Activated B cell treated with CpG ODN at 0.5 μM for 24 hours (primary cell): ENCODE measurements at regions of chr4 and their contacts with region 1.

Region 1: GRCh38 chr4:81471588-81472288 is at the start of gene RASGEF1B:
- DNase-seq: peak; percentile 97
- ATAC-seq: peak; percentile 82
- H3K4me3 Mint-ChIP-seq: peak within 1 kb of the TSS; percentile 92
- H3K27ac Mint-ChIP-seq: peak within 1 kb of the TSS; percentile 97
- H3K4me1 Mint-ChIP-seq: peaks cover 53% of the 10 kb centered on the region
- H3K27me3 Mint-ChIP-seq: no peaks in the 10 kb centered on the region
- CTCF ChIP-seq: no peak
- total RNA-seq, gene RASGEF1B: 40.2 and 43.7 TPM in 2 replicates

Region 2: GRCh38 chr4:81405894-81406401 is 65.8 kb before region 1 on chr4:
- CTCF ChIA-PET with region 1: no interaction called
- POLR2A ChIA-PET with region 1: no interaction called
- intact Hi-C with region 1: loop called (anchors 1 kb)
- DNase-seq: no peak
- ATAC-seq: peak; percentile 81
- H3K4me3 Mint-ChIP-seq: no peak overlapping the region
- H3K27ac Mint-ChIP-seq: no peak overlapping the region
- H3K4me1 Mint-ChIP-seq: peaks cover 3% of the 10 kb centered on the region
- H3K27me3 Mint-ChIP-seq: peaks cover 3% of the 10 kb centered on the region
- CTCF ChIP-seq: peak; percentile 93

Region 3: GRCh38 chr4:81505004-81505598 is 33.4 kb after region 1 on chr4:
- CTCF ChIA-PET with region 1: interaction called, 7 read pairs
- POLR2A ChIA-PET with region 1: interaction called, 34 read pairs
- intact Hi-C with region 1: loop called (anchors 1 kb)
- DNase-seq: no peak
- ATAC-seq: peak; percentile 56
- H3K4me3 Mint-ChIP-seq: peak overlapping the region; percentile 71
- H3K27ac Mint-ChIP-seq: peak overlapping the region; percentile 92
- H3K4me1 Mint-ChIP-seq: peaks cover 86% of the 10 kb centered on the region
- H3K27me3 Mint-ChIP-seq: no peaks in the 10 kb centered on the region
- CTCF ChIP-seq: no peak

Region 4: DNA sequence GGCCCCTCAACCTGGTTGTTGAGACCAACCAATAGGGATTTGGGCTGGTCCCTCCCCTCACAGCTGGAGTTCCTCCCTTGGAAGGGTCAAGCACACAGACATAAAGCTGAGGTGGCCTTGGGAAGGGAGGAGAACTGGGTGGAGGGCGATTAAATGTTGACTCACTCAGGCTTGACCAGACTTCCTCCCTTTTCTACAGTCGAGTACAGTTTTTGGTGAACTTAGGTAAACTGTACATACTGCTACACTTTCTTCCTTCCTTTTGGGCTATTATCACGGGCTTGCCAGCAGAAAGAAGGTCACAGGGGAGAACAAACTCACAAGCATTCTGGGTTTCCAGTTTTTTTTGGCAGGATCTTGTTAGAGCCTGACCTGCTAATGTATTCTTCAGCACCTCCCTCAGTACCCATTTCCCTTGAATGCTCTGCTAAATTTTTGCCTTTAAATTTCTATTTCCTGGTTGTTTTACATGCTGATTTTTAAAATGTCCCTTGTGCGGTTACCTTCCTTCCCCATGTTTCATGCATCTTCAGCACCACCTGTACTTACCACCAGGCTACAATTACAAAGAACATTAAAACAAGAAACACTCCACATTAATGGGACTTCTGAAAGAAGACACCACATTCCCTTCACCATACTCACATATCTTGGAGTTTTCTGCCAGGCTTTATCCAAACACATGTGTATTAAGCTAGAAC is 135.2 kb after region 1 on chr4:
- CTCF ChIA-PET with region 1: interaction called, 14 read pairs
- POLR2A ChIA-PET with region 1: interaction called, 38 read pairs
- intact Hi-C with region 1: loop called (anchors 1 kb)
- DNase-seq: no peak
- ATAC-seq: peak; percentile 54
- H3K4me3 Mint-ChIP-seq: peak overlapping the region; percentile 55
- H3K27ac Mint-ChIP-seq: peak overlapping the region; percentile 86
- H3K4me1 Mint-ChIP-seq: peaks cover 58% of the 10 kb centered on the region
- H3K27me3 Mint-ChIP-seq: no peaks in the 10 kb centered on the region
- CTCF ChIP-seq: no peak

Region 5: DNA sequence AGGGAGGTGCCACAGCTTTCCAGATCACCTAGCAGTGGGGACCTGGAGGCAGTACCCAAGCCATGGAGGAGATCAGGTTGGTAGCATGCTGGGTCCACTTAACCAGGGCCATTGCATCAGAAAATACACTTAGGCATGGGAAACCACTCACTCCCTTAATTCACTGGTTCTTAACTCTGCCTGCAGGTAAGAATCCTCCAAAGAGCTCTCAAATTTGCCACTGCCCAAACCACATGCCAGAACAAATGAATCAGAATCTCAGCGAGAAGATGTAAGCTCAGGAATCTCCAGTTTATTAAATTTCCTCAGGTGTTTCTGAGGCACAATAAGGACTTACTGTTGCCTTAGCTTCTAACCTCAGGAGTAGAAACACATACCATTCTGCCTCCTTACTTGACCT is 327.6 kb after region 1 on chr4:
- CTCF ChIA-PET with region 1: no interaction called
- POLR2A ChIA-PET with region 1: no interaction called
- intact Hi-C with region 1: no loop called
- DNase-seq: no peak
- ATAC-seq: no peak
- H3K4me3 Mint-ChIP-seq: no peak overlapping the region
- H3K27ac Mint-ChIP-seq: no peak overlapping the region
- H3K4me1 Mint-ChIP-seq: peaks cover 7% of the 10 kb centered on the region
- H3K27me3 Mint-ChIP-seq: no peaks in the 10 kb centered on the region
- CTCF ChIP-seq: no peak

Region 6: DNA sequence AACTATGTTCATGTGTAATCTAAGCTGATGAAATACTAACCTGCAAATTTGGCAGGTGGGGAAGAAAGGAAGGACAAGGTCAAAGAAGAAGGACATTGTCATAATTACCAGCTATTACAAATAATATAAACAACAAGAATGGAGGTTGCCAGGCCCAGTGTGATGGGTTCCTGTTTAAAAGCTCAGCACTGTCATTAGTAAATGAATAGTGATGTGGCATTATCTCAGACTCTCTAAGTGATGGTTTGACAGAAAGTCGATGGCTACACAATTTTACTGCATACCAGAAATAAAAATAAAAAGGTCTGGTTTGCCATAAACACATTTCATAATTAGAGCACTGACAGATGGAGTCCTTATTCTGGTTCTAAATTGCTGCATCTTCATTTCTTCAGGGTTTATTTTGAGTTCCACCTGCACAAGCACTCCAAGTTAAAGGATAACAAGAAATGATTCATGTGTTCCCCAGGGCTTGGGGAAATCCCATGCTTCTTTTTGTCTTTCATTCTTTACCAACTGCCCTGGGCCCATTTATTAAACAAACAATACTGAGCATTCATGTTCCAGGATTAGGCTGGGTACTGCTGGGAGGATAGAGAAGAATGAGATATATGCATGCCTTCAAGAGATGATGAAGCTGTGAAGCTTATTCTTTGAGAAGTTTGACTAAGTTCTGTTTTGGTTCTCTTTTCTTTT is 367.8 kb after region 1 on chr4:
- CTCF ChIA-PET with region 1: interaction called, 239 read pairs
- POLR2A ChIA-PET with region 1: interaction called, 26 read pairs
- intact Hi-C with region 1: loop called (anchors 1 kb)
- DNase-seq: no peak
- ATAC-seq: peak; percentile 68
- H3K4me3 Mint-ChIP-seq: no peak overlapping the region
- H3K27ac Mint-ChIP-seq: peak overlapping the region; percentile 4
- H3K4me1 Mint-ChIP-seq: peaks cover 13% of the 10 kb centered on the region
- H3K27me3 Mint-ChIP-seq: no peaks in the 10 kb centered on the region
- CTCF ChIP-seq: no peak

Region 7: DNA sequence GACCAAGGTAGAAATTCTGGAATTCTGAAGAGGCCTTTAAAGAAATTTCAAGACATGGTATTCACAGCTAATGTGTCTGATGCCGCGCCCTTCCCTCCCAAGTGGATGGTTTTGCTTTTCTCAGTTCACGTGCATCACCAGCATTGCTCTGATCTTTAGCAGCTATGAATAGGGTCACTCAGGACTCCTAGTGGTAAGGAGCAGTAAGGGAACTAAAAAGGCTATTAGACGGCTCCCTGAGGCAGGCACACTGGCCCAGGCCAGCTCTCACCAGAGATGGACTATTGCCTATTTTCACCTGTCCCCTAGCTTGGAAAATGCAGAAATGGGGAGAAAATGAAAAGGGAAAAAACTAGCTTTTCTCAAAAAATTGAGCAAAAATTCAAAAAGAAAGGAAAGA is 447.5 kb after region 1 on chr4:
- CTCF ChIA-PET with region 1: interaction called, 10 read pairs
- POLR2A ChIA-PET with region 1: no interaction called
- intact Hi-C with region 1: loop called (anchors 1 kb)
- DNase-seq: no peak
- ATAC-seq: peak; percentile 72
- H3K4me3 Mint-ChIP-seq: no peak overlapping the region
- H3K27ac Mint-ChIP-seq: no peak overlapping the region
- H3K4me1 Mint-ChIP-seq: no peaks in the 10 kb centered on the region
- H3K27me3 Mint-ChIP-seq: peaks cover 9% of the 10 kb centered on the region
- CTCF ChIP-seq: no peak

Region 8: GRCh38 chr4:82031376-82031927 is 559.7 kb after region 1 on chr4:
- CTCF ChIA-PET with region 1: no interaction called
- POLR2A ChIA-PET with region 1: no interaction called
- intact Hi-C with region 1: no loop called
- DNase-seq: no peak
- ATAC-seq: no peak
- H3K4me3 Mint-ChIP-seq: no peak overlapping the region
- H3K27ac Mint-ChIP-seq: no peak overlapping the region
- H3K4me1 Mint-ChIP-seq: no peaks in the 10 kb centered on the region
- H3K27me3 Mint-ChIP-seq: peaks cover 40% of the 10 kb centered on the region
- CTCF ChIP-seq: no peak

Region 9: DNA sequence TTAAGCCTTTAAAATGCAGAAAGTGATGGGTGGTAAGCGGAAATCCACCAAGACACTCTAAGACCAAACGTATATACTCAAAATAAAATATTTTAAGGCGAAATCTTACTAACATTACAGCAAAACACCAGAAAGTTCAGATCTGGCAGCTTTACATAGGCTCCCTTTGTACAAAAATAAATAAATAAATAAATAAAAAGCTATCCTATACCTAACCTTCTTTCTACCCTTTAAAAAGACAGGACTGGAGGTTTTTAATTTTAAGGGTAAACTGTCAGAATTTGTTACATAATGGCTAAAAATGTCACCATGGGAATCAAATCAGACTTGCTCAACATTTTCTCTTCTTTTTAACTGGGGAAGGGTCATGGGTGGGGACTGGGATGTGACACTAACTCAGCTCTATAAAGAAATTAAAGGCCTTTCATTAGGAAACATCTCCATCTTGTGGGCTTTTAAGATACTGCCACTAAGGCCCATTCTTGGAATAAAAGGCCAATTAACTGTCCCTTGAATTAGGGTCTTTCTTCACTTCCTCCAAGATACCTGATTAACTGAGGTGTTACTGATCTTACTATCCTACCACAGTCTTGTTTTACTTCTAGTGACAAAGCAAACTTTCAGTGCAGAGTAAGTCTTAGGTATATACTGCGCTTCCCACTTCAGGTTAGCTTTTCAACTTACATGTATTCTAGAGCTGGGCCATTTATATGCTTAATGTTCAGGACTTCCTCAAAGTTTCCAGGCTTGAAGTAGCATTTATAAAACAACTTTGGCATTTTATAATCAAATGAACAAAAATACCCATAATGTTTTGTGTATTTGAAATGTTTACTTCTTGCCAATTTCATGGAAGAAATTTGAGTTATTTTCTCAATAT is 888.8 kb after region 1 on chr4:
- CTCF ChIA-PET with region 1: interaction called, 15 read pairs
- POLR2A ChIA-PET with region 1: no interaction called
- intact Hi-C with region 1: loop called (anchors 1 kb)
- DNase-seq: no peak
- ATAC-seq: peak; percentile 75
- H3K4me3 Mint-ChIP-seq: no peak overlapping the region
- H3K27ac Mint-ChIP-seq: peak overlapping the region; percentile 6
- H3K4me1 Mint-ChIP-seq: peaks cover 69% of the 10 kb centered on the region
- H3K27me3 Mint-ChIP-seq: no peaks in the 10 kb centered on the region
- CTCF ChIP-seq: peak; percentile 38